ENCODE measurements at regions of chr10 and their contacts with region 1.

Region 1: GRCh38 chr10:99620713-99621453 is 644 bp upstream of the SLC25A28 start:
- DNase-seq: peak; percentile 92
- ATAC-seq: peak; percentile 90 to 96 (median 94)
- H3K4me3 ChIP-seq: peak overlapping the region; percentile 53 to 95 (median 92)
- H3K27ac ChIP-seq: peak overlapping the region; percentile 93 to 100 (median 98)
- H3K4me1 ChIP-seq: peaks cover 6 to 48% (median 45%) of the 10 kb centered on the region in 9 donors
- H3K27me3 ChIP-seq: no peaks in the 10 kb centered on the region
- CTCF ChIP-seq: peak in 2 of 9 donors; percentile 4 to 16

Region 2: DNA sequence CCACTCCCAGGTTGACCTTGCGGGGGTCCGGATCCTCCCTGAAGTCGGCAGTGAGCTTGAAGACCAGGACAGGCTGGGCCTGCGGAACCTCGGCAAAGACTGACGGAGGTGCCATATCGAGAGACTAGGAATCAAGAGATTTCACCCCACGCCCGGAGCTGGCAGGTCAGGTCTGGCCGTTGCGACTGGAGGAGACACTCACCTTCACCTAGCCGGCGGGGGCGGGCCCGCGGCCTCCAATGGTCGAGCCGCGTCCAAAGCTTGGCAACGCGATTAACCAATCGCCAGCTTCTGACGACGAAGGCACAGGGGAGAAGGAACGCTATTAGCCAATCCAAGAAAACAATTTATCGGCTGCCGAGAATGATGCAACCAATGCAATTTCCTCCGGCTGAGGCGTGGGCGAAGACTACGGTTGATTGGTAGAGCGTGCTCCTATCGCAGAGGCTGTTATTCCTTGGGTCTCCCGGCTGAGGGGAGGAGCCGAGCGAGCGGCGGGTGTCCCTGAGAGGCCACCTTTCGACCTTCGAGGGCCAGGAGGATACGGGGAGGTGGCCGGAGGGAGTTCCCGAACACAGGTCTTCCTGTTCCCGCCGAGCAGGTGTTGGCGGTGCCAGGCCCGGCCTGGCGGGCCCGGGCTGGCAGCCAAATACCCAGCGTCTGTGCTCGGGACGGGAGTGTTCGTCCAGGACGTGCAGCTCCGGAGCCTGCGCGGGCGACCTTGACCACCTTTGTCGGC is 190.3 kb before region 1 on chr10 and contains the start of gene GOT1:
- intact Hi-C with region 1: loop called in 5 of 10 experiments (anchors 2 to 10 kb)
- DNase-seq: peak; percentile 91 to 98
- ATAC-seq: peak; percentile 95 to 97 (median 97)
- H3K4me3 ChIP-seq: peak within 1 kb of the TSS; percentile 68 to 96 (median 86)
- H3K27ac ChIP-seq: peak within 1 kb of the TSS; percentile 90 to 99 (median 96)
- H3K4me1 ChIP-seq: peaks cover 0 to 76% (median 36%) of the 10 kb centered on the region in 9 donors
- H3K27me3 ChIP-seq: no peaks in the 10 kb centered on the region
- CTCF ChIP-seq: no peak
- total RNA-seq, gene GOT1: 362 to 669 (median 586) TPM

Region 3: DNA sequence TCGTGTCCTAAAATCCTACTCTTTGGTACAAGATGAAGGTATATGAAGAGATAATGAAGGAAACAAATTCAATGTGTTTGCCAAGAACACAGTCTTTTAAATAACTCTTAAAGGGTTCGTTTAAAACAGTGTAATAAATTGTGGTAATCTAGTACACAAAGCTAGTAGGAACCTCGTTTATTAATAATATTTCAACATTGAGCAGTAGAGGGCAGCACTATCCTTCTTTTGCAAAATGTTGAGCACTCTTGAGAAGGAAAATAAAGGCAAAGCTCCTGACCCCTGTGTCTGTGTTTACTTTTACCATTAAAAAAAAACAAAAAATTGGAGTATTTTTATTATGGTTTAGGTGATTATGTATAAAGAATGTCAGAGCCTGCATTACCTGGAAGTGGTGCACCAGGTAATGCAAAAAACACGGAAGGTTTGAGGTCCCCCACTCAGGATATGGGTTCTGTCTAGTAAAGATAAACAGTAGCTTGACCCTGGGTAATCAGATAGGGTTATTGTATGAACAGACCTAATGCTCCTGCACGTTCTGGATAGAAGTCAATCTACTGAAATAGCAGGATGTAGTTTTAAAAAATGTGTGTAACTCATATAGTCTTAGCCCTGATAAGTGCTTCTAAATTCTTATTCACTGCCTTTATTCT is 184.8 kb before region 1 on chr10:
- intact Hi-C with region 1: loop called in 5 of 10 experiments (anchors 2 to 10 kb)
- DNase-seq: no peak
- ATAC-seq: peak in 4 of 8 donors; percentile 19 to 40 (median 34)
- H3K4me3 ChIP-seq: no peak overlapping the region
- H3K27ac ChIP-seq: peak overlapping the region in 1 of 10 donors; percentile 11
- H3K4me1 ChIP-seq: peaks cover 0 to 59% (median 25%) of the 10 kb centered on the region in 9 donors
- H3K27me3 ChIP-seq: no peaks in the 10 kb centered on the region
- CTCF ChIP-seq: peak; percentile 39 to 72 (median 61)

Region 4: GRCh38 chr10:99659031-99659867 is 38.4 kb after region 1 on chr10 and contains the start of gene ENTPD7:
- intact Hi-C with region 1: loop called in 5 of 10 experiments (anchors 1 to 5 kb)
- DNase-seq: peak; percentile 93 to 94
- ATAC-seq: peak; percentile 99 to 100 (median 100)
- H3K4me3 ChIP-seq: peak within 1 kb of the TSS; percentile 63 to 98 (median 74)
- H3K27ac ChIP-seq: peak within 1 kb of the TSS in 7 of 10 donors; percentile 4 to 80 (median 58)
- H3K4me1 ChIP-seq: peaks cover 5 to 53% (median 23%) of the 10 kb centered on the region in 9 donors
- H3K27me3 ChIP-seq: no peaks in the 10 kb centered on the region
- CTCF ChIP-seq: peak in 8 of 9 donors; percentile 10 to 52 (median 43)
- total RNA-seq, gene ENTPD7: 1.7 to 3.8 (median 2.5) TPM

Region 5: DNA sequence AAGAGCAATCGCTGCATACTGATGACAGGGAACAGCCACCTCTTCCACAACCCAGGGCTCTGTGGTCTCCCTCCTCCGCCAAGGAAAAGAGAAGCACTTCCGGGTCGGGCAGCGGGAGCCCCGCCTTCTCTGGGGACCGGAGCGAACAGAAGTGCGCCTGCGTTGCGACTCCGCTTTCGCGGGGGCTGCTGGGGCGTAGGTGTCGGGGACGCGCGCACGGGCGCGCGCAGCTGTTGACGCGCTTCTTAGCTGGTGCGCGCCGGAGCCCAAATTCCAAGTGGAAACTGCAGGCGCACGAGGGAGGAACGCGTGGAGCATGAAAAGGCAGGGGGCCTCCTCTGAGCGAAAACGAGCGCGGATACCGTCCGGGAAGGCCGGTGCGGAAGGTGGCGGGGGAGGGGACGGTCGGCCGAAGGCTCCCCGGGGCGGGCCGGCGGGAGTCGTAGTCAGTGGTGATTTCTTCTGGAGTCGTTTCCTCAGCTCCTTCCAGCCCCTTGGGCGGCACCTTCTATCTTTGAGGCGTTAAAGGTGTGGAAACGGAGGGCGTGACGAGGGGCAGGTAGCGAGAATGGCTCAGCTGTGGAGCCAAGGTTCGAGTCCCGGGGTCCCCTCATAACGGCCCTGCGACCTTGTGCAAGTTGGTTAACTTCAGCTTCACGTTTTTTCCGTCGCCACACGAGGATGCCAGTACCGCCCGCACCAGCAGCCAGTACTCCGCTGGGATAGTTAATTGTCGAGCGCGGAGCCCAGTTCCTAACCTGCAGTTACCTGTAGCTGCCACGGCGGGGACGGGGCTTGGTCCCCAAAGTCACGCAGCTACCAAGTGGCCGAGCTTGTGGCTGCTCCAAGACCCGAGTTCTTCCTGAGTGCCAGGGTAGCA is 111.4 kb after region 1 on chr10 and contains the starts of genes COX15 and CUTC:
- intact Hi-C with region 1: loop called in 2 of 10 experiments (anchors 2 to 5 kb)
- DNase-seq: peak; percentile 97
- ATAC-seq: peak; percentile 97 to 99 (median 99)
- H3K4me3 ChIP-seq: peak within 1 kb of the TSS; percentile 61 to 94 (median 82)
- H3K27ac ChIP-seq: peak within 1 kb of the TSS; percentile 57 to 97 (median 94)
- H3K4me1 ChIP-seq: peaks cover 0 to 41% (median 24%) of the 10 kb centered on the region in 9 donors
- H3K27me3 ChIP-seq: no peaks in the 10 kb centered on the region
- CTCF ChIP-seq: peak in 6 of 9 donors; percentile 6 to 31 (median 18)
- total RNA-seq, gene COX15: 29.6 to 47.2 (median 38.7) TPM
- total RNA-seq, gene CUTC: 29.7 to 43.7 (median 35.1) TPM

Measured in heart right ventricle (tissue), 16 donors.